Activated CD8-positive, alpha-beta T cell treated with anti-CD3 and anti-CD28 coated beads, Interleukin-2, amount 10 ng/mL, durations not matched to agents 7 days and 5 days (primary cell): ENCODE measurements at regions of chr11 and their contacts with region 1.

Region 1: GRCh38 chr11:65013692-65014145 is 241 bp upstream of the ARL2 start:
- DNase-seq: peak; percentile 89
- ATAC-seq: peak; percentile 86
- H3K4me3 Mint-ChIP-seq: peak overlapping the region; percentile 81
- H3K27ac Mint-ChIP-seq: peak overlapping the region; percentile 94
- H3K4me1 Mint-ChIP-seq: peaks cover 25% of the 10 kb centered on the region
- H3K27me3 Mint-ChIP-seq: no peaks in the 10 kb centered on the region

Region 2: DNA sequence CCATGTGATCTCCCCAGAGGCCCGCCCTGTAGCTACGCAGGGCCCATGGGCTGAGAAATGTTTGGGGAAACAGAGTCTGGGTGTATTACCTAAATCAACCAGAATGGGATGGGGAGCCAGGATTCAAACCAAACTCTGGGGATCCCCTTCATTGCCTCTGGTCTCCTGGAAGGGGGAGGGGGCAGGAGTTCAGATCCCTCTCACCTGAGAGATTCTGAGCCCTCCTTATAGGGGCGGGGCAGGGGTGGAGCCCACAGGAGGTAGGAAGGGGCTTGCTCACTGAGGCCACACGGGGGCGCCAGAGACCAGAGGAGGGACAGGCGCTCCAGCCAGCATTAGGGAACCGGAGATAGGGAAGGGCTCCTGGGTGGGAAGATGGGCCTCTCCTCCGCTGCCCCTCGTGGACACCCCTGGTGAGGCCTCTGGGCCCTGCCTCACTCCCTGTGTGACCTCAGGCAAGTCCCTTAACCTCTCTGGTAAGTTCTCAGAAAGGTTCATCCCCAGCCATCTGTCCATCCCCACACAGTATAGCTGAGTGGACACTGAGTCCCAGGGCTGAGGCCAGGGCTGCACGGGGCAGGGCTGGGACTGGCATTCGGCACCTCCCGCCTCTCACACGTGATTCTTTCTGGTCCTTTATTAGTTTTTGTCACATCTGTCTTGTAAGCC is 166.6 kb before region 1 on chr11:
- CTCF ChIA-PET with region 1: interaction called, 33 read pairs
- POLR2A ChIA-PET with region 1: no interaction called
- DNase-seq: peak; percentile 94
- ATAC-seq: peak; percentile 70
- H3K4me3 Mint-ChIP-seq: no peak overlapping the region
- H3K27ac Mint-ChIP-seq: peak overlapping the region; percentile 6
- H3K4me1 Mint-ChIP-seq: peaks cover 61% of the 10 kb centered on the region
- H3K27me3 Mint-ChIP-seq: no peaks in the 10 kb centered on the region

Region 3: GRCh38 chr11:64878494-64879243 is 135.1 kb before region 1 on chr11 and contains the start of gene EHD1:
- CTCF ChIA-PET with region 1: interaction called, 10 read pairs
- POLR2A ChIA-PET with region 1: no interaction called
- DNase-seq: peak; percentile 100
- ATAC-seq: peak; percentile 81
- H3K4me3 Mint-ChIP-seq: peak within 1 kb of the TSS; percentile 98
- H3K27ac Mint-ChIP-seq: peak within 1 kb of the TSS; percentile 92
- H3K4me1 Mint-ChIP-seq: peaks cover 62% of the 10 kb centered on the region
- H3K27me3 Mint-ChIP-seq: no peaks in the 10 kb centered on the region
- total RNA-seq, gene EHD1: 145 to 150 TPM

Region 4: GRCh38 chr11:64971421-64972233 is 42.1 kb before region 1 on chr11 and contains the start of gene MAJIN:
- CTCF ChIA-PET with region 1: no interaction called
- POLR2A ChIA-PET with region 1: no interaction called
- DNase-seq: peak; percentile 83
- ATAC-seq: peak; percentile 78
- H3K4me3 Mint-ChIP-seq: peak within 1 kb of the TSS; percentile 45
- H3K27ac Mint-ChIP-seq: no peak within 1 kb of the TSS
- H3K4me1 Mint-ChIP-seq: peaks cover 18% of the 10 kb centered on the region
- H3K27me3 Mint-ChIP-seq: no peaks in the 10 kb centered on the region
- total RNA-seq, gene MAJIN: not detected

Region 5: DNA sequence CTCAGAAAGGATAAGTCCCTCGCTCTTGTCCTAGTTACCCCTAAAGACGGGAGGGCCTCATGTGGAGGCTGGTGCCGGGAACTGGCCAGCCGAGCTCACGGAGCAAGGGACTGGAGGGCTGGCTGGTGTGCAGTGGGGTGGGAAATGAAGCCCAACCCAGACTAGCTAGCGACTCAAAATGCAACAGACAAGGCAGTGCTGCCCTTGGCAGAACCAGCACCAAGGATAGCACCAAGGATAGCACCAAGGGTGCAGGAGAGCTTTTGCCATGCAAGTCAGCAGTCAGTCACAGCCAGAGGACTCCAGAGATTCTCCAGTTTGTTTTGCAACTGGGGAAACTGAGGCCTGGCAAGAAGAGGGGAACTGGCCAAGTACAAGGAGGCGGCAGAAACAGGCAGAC is 10.4 kb before region 1 on chr11:
- CTCF ChIA-PET with region 1: interaction called, 30 read pairs
- POLR2A ChIA-PET with region 1: interaction called, 3 read pairs
- DNase-seq: no peak
- ATAC-seq: no peak
- H3K4me3 Mint-ChIP-seq: no peak overlapping the region
- H3K27ac Mint-ChIP-seq: no peak overlapping the region
- H3K4me1 Mint-ChIP-seq: peaks cover 14% of the 10 kb centered on the region
- H3K27me3 Mint-ChIP-seq: no peaks in the 10 kb centered on the region

Region 6: GRCh38 chr11:65040847-65041621 is 27.3 kb after region 1 on chr11 and contains the start of gene SAC3D1:
- CTCF ChIA-PET with region 1: interaction called, 32 read pairs
- POLR2A ChIA-PET with region 1: interaction called, 14 read pairs
- DNase-seq: peak; percentile 97
- ATAC-seq: peak; percentile 95
- H3K4me3 Mint-ChIP-seq: peak within 1 kb of the TSS; percentile 88
- H3K27ac Mint-ChIP-seq: peak within 1 kb of the TSS; percentile 95
- H3K4me1 Mint-ChIP-seq: peaks cover 35% of the 10 kb centered on the region
- H3K27me3 Mint-ChIP-seq: no peaks in the 10 kb centered on the region
- total RNA-seq, gene SAC3D1: 36.3 to 36.6 TPM

Region 7: DNA sequence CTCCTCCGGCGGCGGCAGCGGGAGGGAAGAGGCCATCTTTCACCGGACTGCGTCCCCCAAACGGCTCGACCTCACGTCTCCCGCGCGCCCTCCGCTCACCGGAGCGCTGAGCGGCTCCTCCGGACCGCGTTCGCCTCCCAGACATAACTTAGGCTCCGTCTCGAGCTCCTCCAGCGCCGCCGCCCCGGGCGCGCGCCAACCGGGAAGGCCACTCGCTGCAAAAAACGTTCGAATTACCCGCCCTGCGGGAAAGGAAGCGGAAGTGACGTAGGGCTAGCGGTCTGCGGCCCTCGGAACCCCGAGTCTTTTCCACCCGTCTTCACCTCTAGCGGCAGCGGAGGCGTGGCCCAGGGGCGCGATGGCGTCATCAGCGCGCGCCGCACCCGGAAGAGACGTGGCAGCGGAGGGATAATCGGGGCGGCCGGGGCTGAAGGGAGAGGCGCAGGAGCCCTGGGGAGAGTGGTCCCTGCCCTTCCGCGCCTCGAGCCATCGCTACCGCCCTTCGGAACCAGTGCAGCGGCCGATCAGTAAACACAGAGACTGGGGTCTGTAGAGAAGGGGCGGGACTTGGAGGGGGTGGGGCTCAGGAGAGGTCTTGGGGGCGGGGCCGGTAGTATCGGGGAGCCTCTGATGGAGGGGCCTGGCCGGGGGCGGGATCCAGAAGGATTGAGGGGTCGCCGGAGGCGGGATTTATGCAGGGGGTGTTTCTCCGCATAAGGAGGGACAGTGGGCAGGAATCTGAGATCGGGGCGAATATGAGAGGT is 70.3 kb after region 1 on chr11 and contains the starts of genes CDCA5 and ZFPL1:
- CTCF ChIA-PET with region 1: interaction called, 26 read pairs
- POLR2A ChIA-PET with region 1: interaction called, 6 read pairs
- DNase-seq: peak; percentile 97
- ATAC-seq: peak; percentile 84
- H3K4me3 Mint-ChIP-seq: peak within 1 kb of the TSS; percentile 92
- H3K27ac Mint-ChIP-seq: peak within 1 kb of the TSS; percentile 98
- H3K4me1 Mint-ChIP-seq: peaks cover 52% of the 10 kb centered on the region
- H3K27me3 Mint-ChIP-seq: no peaks in the 10 kb centered on the region
- total RNA-seq, gene CDCA5: 127 to 129 TPM
- total RNA-seq, gene ZFPL1: 28.0 to 28.8 TPM

Region 8: GRCh38 chr11:65117216-65118096 is 103.7 kb after region 1 on chr11 and contains the start of gene ZNHIT2:
- CTCF ChIA-PET with region 1: interaction called, 39 read pairs
- POLR2A ChIA-PET with region 1: interaction called, 9 read pairs
- DNase-seq: peak; percentile 100
- ATAC-seq: peak; percentile 66
- H3K4me3 Mint-ChIP-seq: peak within 1 kb of the TSS; percentile 90
- H3K27ac Mint-ChIP-seq: peak within 1 kb of the TSS; percentile 97
- H3K4me1 Mint-ChIP-seq: peaks cover 63% of the 10 kb centered on the region
- H3K27me3 Mint-ChIP-seq: no peaks in the 10 kb centered on the region
- total RNA-seq, gene ZNHIT2: 11.6 to 12.4 TPM

Region 9: GRCh38 chr11:65382033-65382807 is 368.5 kb after region 1 on chr11 and contains the start of gene SLC25A45:
- CTCF ChIA-PET with region 1: no interaction called
- POLR2A ChIA-PET with region 1: no interaction called
- DNase-seq: peak; percentile 92
- ATAC-seq: peak; percentile 87
- H3K4me3 Mint-ChIP-seq: peak within 1 kb of the TSS; percentile 83
- H3K27ac Mint-ChIP-seq: peak within 1 kb of the TSS; percentile 99
- H3K4me1 Mint-ChIP-seq: peaks cover 47% of the 10 kb centered on the region
- H3K27me3 Mint-ChIP-seq: no peaks in the 10 kb centered on the region
- total RNA-seq, gene SLC25A45: 24.5 to 28.2 TPM

Region 10: GRCh38 chr11:65625628-65626342 is 612.1 kb after region 1 on chr11:
- CTCF ChIA-PET with region 1: no interaction called
- POLR2A ChIA-PET with region 1: no interaction called
- DNase-seq: peak; percentile 62
- ATAC-seq: peak; percentile 79
- H3K4me3 Mint-ChIP-seq: no peak overlapping the region
- H3K27ac Mint-ChIP-seq: no peak overlapping the region
- H3K4me1 Mint-ChIP-seq: peaks cover 7% of the 10 kb centered on the region
- H3K27me3 Mint-ChIP-seq: no peaks in the 10 kb centered on the region